GM12878 (cell line): ENCODE measurements at regions of chr11 and their contacts with region 1.

Region 1: GRCh38 chr11:121406291-121406690 is 45.8 kb upstream of the SORL1 start:
- DNase-seq: no peak
- ATAC-seq: peak; percentile 26; the same call in 2 of the 3 replicates
- H3K4me3 ChIP-seq: no peak overlapping the region
- H3K27ac ChIP-seq: no peak overlapping the region
- H3K4me1 ChIP-seq: peaks cover 5% of the 10 kb centered on the region; the same call in 1 of the 2 replicates
- H3K27me3 ChIP-seq: no peaks in the 10 kb centered on the region
- CTCF ChIP-seq: no peak
- EP300 ChIP-seq: no peak
- POLR2A ChIP-seq: no peak
- RAD21 ChIP-seq: no peak

Region 2: GRCh38 chr11:121372671-121373429 is 33.4 kb before region 1 on chr11:
- CTCF ChIA-PET with region 1: interaction called, 13 read pairs
- POLR2A ChIA-PET with region 1: interaction called, 3 read pairs
- RAD21 ChIA-PET with region 1: interaction called, 5 read pairs
- SMC1A ChIA-PET with region 1: interaction called, 11 read pairs
- in situ Hi-C with region 1: no loop called
- intact Hi-C with region 1: no loop called
- DNase-seq: peak; percentile 82
- ATAC-seq: peak; percentile 89
- H3K4me3 ChIP-seq: peak overlapping the region; percentile 46; the same call in 1 of the 2 replicates
- H3K27ac ChIP-seq: peak overlapping the region; percentile 80
- H3K4me1 ChIP-seq: peaks cover 53% of the 10 kb centered on the region
- H3K27me3 ChIP-seq: no peaks in the 10 kb centered on the region
- CTCF ChIP-seq: no peak
- EP300 ChIP-seq: no peak
- POLR2A ChIP-seq: peak; percentile 69
- RAD21 ChIP-seq: 0 out of 2 replicates have a peak, but pooled peaks have one; percentile 4

Region 3: GRCh38 chr11:121394785-121395184 is 11.5 kb before region 1 on chr11:
- CTCF ChIA-PET with region 1: interaction called, 4 read pairs
- POLR2A ChIA-PET with region 1: no interaction called
- RAD21 ChIA-PET with region 1: no interaction called
- SMC1A ChIA-PET with region 1: interaction called, 46 read pairs
- in situ Hi-C with region 1: no loop called
- intact Hi-C with region 1: no loop called
- DNase-seq: no peak
- ATAC-seq: peak; percentile 37; the same call in 2 of the 3 replicates
- H3K4me3 ChIP-seq: no peak overlapping the region
- H3K27ac ChIP-seq: no peak overlapping the region
- H3K4me1 ChIP-seq: peaks cover 13% of the 10 kb centered on the region
- H3K27me3 ChIP-seq: no peaks in the 10 kb centered on the region
- CTCF ChIP-seq: no peak
- EP300 ChIP-seq: no peak
- POLR2A ChIP-seq: no peak
- RAD21 ChIP-seq: no peak

Region 4: DNA sequence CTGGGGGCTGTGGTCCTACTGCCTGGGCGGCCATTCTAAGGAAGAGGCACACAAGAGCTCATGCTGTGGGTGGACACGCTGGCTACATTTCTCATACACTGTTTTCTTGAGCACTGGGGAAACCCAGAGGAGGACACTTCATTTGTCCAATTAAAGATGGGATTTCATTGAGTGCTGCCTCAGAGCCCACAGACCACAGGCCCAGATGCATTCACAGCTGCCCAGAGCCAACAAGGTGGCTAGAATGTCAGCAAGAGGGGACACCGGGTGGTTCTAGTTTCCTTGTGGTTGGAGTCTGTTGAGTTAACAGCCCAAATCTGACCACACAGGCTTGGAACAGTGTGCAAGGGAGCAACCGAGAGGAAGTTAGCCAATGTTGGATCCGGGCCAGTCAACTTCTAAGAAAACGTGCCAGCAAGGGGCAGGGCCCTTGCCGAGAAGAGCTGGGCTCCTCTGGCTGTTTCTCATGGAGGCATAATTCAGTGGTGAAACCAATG is 10.8 kb after region 1 on chr11:
- CTCF ChIA-PET with region 1: interaction called, 3 read pairs
- POLR2A ChIA-PET with region 1: interaction called, 11 read pairs
- RAD21 ChIA-PET with region 1: interaction called, 7 read pairs
- SMC1A ChIA-PET with region 1: interaction called, 10 read pairs
- in situ Hi-C with region 1: no loop called
- intact Hi-C with region 1: no loop called
- DNase-seq: peak; percentile 92
- ATAC-seq: peak; percentile 87
- H3K4me3 ChIP-seq: no peak overlapping the region
- H3K27ac ChIP-seq: peak overlapping the region; percentile 9; the same call in 1 of the 2 replicates
- H3K4me1 ChIP-seq: peaks cover 45% of the 10 kb centered on the region
- H3K27me3 ChIP-seq: no peaks in the 10 kb centered on the region
- CTCF ChIP-seq: no peak
- EP300 ChIP-seq: peak; percentile 26 to 71; a peak in 2 of 4 replicates
- POLR2A ChIP-seq: no peak
- RAD21 ChIP-seq: no peak

Region 5: GRCh38 chr11:121426476-121427399 is 20.4 kb after region 1 on chr11:
- CTCF ChIA-PET with region 1: interaction called, 5 read pairs
- POLR2A ChIA-PET with region 1: interaction called, 7 read pairs
- RAD21 ChIA-PET with region 1: interaction called, 5 read pairs
- SMC1A ChIA-PET with region 1: interaction called, 12 read pairs
- in situ Hi-C with region 1: no loop called
- intact Hi-C with region 1: no loop called
- DNase-seq: no peak
- ATAC-seq: peak; percentile 57
- H3K4me3 ChIP-seq: peak overlapping the region; percentile 39; the same call in 1 of the 2 replicates
- H3K27ac ChIP-seq: no peak overlapping the region
- H3K4me1 ChIP-seq: peaks cover 46% of the 10 kb centered on the region
- H3K27me3 ChIP-seq: no peaks in the 10 kb centered on the region
- CTCF ChIP-seq: peak in 2 of 3 experiments; percentile 14 to 21; a peak in 1 of 6 replicates
- EP300 ChIP-seq: no peak
- POLR2A ChIP-seq: no peak
- RAD21 ChIP-seq: no peak

Region 6: DNA sequence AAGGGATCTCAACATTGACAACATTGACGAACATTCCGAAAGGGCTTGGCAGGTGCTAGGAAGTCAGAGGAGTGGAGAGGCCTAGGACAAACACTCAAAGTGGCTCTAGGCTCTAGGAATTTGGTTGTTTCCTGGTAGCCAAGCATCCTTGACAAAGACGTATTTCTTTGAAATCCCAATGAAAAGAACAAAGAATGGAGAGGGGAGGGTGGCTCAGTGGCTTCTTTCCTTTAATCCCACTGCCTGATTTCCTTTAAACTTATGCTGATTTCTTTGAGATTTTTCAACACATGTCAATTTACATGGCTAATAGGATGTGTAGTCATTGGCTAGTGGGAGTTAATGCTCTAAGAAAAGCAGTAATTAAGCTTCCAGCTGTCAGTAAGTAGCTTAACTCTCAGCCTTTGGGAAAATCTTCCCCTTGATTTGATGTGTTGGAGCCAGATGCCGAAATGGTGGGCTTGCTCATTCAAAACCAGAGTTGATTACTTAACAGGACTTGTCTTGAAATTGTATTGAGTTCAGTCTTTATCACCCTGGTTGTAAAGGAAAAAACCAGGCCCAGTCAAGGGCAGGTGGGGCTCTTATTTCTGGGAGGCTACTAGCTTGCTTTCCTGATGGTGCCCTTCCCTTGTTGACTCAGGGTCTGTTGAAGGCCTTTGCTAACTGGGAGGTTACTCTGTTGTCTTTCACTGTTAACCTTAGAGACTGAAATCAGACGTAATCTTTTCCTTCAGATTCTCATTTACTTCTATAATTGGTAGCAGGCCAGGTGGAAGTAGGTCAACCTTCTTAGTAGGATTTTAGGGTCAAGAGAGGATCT is 91.1 kb after region 1 on chr11:
- CTCF ChIA-PET with region 1: no interaction called
- POLR2A ChIA-PET with region 1: no interaction called
- RAD21 ChIA-PET with region 1: no interaction called
- SMC1A ChIA-PET with region 1: no interaction called
- in situ Hi-C with region 1: no loop called
- intact Hi-C with region 1: no loop called
- DNase-seq: no peak
- ATAC-seq: no peak
- H3K4me3 ChIP-seq: no peak overlapping the region
- H3K27ac ChIP-seq: no peak overlapping the region
- H3K4me1 ChIP-seq: peaks cover 27% of the 10 kb centered on the region
- H3K27me3 ChIP-seq: no peaks in the 10 kb centered on the region
- CTCF ChIP-seq: no peak
- EP300 ChIP-seq: no peak
- POLR2A ChIP-seq: no peak
- RAD21 ChIP-seq: no peak